Calu3 (cell line): ENCODE measurements at regions of chr10 and their contacts with region 1.

Region 1: DNA sequence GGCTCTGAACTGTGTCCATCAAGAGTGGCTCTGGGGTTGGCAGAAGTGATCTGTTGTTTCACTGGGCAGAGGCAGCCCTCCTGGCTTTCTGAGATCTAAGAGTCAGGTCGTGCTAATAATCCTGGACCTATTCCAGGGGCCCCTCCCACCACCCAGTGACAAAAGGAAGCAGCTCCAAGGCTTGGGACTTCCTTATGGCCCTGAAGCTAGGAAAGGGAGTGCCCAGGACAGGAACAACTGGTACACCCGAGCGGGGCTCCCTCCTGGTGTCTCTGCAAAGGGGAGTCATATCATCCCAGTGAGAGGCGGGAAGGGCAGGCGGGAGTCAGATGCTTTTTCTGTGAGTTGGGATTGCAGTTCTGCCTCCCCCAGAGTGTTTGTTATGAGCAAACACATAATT is 32.3 kb downstream of the RPS24 start:
- DNase-seq: peak; percentile 32
- H3K4me3 Mint-ChIP-seq: no peak overlapping the region
- H3K27ac Mint-ChIP-seq: no peak overlapping the region
- H3K4me1 Mint-ChIP-seq: no peaks in the 10 kb centered on the region
- H3K27me3 Mint-ChIP-seq: peaks cover 70% of the 10 kb centered on the region
- CTCF ChIP-seq: no peak

Region 2: DNA sequence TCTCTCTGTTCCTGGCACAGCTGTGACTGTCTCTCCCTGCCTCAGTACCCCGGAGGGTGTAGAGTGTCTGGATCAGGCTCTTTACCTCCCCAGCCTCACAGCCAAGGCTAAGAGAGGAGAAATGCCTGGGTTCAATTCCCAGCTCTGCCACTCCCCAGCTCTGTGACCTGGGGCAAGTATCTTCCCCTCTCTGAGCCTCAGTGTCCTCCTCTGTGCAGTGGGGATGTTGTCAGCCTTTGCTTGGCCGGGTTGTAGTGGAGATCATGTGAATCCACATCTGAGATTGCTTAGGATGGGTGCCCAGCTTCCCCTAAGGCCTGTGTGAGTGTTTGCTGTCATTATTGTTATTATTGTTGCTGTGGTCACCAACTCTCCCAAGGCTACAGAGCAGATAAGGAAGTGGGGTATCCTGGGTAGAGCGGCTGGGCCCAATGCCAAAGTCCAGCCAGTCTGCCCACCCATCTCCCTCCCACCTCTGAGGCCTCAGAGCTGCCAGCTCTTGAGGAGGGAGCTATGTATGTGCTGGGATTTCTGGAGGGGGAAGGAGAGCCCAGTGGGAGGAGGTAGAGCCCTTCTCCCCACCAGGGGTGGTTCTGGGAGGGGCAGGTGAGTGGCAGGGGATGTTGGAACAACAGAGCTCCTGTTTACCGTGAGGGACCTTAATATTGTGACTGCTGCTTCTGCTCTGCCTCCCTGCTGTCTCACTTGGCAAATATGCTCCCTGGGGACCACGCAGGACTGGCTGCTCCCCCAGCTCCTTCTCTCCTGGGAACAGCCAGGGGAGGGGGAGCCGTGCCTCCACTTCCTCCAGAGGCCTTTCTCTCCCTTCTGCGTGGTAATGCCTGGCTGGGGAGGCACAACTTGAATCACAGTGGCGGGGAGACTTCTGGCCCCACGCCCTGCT is 138.2 kb after region 1 on chr10:
- CTCF ChIA-PET with region 1: no interaction called
- intact Hi-C with region 1: loop called (anchors 10 kb)
- DNase-seq: peak; percentile 33
- H3K4me3 Mint-ChIP-seq: no peak overlapping the region
- H3K27ac Mint-ChIP-seq: no peak overlapping the region
- H3K4me1 Mint-ChIP-seq: no peaks in the 10 kb centered on the region
- H3K27me3 Mint-ChIP-seq: peaks cover 83% of the 10 kb centered on the region
- CTCF ChIP-seq: no peak